ENCODE measurements at regions of chr1 and their contacts with region 1.

Region 1: GRCh38 chr1:100075773-100076172 is 57.0 kb downstream of the SASS6 start:
- DNase-seq: no peak
- ATAC-seq: no peak
- H3K4me3 ChIP-seq: no peak overlapping the region
- H3K4me3 Mint-ChIP-seq: no peak overlapping the region
- H3K27ac ChIP-seq: peak overlapping the region in 1 of 2 donors; percentile 7
- H3K27ac Mint-ChIP-seq: peak overlapping the region; percentile 26
- H3K4me1 ChIP-seq: no peaks in the 10 kb centered on the region
- H3K4me1 Mint-ChIP-seq: peaks cover 3% of the 10 kb centered on the region
- H3K27me3 ChIP-seq: no peaks in the 10 kb centered on the region
- H3K27me3 Mint-ChIP-seq: no peaks in the 10 kb centered on the region
- CTCF ChIP-seq: no peak

Region 2: GRCh38 chr1:100087396-100087795 is 11.6 kb after region 1 on chr1:
- CTCF ChIA-PET with region 1: no interaction called
- POLR2A ChIA-PET with region 1: no interaction called
- intact Hi-C with region 1: loop called (anchors 1 kb)
- DNase-seq: no peak
- ATAC-seq: no peak
- H3K4me3 ChIP-seq: no peak overlapping the region
- H3K4me3 Mint-ChIP-seq: no peak overlapping the region
- H3K27ac ChIP-seq: no peak overlapping the region
- H3K27ac Mint-ChIP-seq: no peak overlapping the region
- H3K4me1 ChIP-seq: no peaks in the 10 kb centered on the region
- H3K4me1 Mint-ChIP-seq: no peaks in the 10 kb centered on the region
- H3K27me3 ChIP-seq: no peaks in the 10 kb centered on the region
- H3K27me3 Mint-ChIP-seq: no peaks in the 10 kb centered on the region
- CTCF ChIP-seq: no peak

Region 3: GRCh38 chr1:100249537-100250257 is 173.9 kb after region 1 on chr1 and contains the start of gene DBT:
- CTCF ChIA-PET with region 1: no interaction called
- POLR2A ChIA-PET with region 1: no interaction called
- intact Hi-C with region 1: no loop called
- DNase-seq: peak; percentile 90
- ATAC-seq: peak; percentile 100
- H3K4me3 ChIP-seq: peak within 1 kb of the TSS; percentile 61 to 99 (median 90)
- H3K4me3 Mint-ChIP-seq: no peak within 1 kb of the TSS
- H3K27ac ChIP-seq: peak within 1 kb of the TSS; percentile 68 to 69
- H3K27ac Mint-ChIP-seq: no peak within 1 kb of the TSS
- H3K4me1 ChIP-seq: peaks cover 12 to 15% of the 10 kb centered on the region in 2 donors
- H3K4me1 Mint-ChIP-seq: peaks cover 13% of the 10 kb centered on the region
- H3K27me3 ChIP-seq: no peaks in the 10 kb centered on the region
- H3K27me3 Mint-ChIP-seq: no peaks in the 10 kb centered on the region
- CTCF ChIP-seq: no peak
- total RNA-seq, gene DBT: 12.9 and 15.1 TPM in 2 replicates

Measured in B cell (primary cell).